AG04449 (cell line): ENCODE measurements at regions of chr10 and their contacts with region 1.

Region 1: DNA sequence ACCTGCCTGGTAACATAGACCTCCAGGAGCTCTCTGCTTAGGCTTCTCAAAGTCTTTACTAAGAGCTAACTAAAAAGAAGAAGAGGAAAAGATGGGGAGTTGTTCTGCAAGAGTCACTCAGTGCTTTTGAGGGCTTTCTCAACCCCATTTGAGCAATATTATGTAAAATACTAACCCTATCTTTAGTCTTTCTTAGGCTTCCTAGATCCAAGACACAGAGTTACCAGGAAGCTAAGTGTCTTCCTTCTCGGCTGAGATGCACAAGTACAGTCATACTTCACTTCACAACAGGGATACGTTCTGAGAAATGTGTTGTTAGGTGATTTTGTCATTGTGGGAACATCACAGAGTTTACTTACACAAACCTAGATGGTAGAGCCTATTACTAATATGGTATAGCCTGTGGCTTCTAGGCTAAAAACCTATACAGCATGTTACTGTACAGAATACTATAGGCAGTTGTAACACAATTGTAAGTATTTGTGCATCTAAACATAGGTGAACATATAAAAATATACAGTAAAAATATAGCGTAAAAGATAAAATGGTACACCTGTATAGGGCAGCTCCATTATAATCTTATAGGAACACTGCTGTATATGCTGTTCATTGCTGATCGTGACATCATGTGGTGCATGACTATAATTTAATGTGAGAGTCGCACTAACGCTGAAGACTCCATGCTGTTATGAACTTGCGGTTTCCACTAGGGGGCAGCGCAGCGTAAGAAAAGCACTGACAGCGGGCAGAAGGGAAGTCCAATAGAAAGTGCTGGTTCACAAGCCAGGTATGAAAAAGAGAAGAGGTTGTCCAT is 16.3 kb downstream of the ANKRD22 start:
- DNase-seq: no peak
- H3K4me3 ChIP-seq: no peak overlapping the region
- CTCF ChIP-seq: peak; percentile 87

Region 2: DNA sequence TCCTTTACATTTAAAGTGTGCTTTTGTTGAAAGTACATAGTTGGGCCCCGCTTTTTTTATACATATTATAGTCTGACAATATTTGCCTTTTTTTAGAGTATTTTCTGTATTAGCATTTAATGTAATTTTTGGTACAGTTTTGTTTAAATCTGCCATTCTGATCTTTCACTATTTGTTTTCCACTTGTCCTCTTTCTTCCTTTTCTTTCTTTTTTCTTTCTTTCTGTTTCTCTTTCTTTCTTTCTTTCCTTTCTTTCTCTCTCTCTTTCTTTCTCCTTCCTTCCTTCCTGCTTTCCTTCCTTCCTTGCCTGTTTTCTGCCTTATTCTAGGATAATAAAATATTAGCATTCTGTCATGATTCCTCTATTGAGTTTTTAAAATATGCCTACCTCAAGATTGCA is 119.8 kb before region 1 on chr10:
- CTCF ChIA-PET with region 1: no interaction called
- POLR2A ChIA-PET with region 1: no interaction called
- DNase-seq: no peak
- H3K4me3 ChIP-seq: no peak overlapping the region
- CTCF ChIP-seq: no peak

Region 3: DNA sequence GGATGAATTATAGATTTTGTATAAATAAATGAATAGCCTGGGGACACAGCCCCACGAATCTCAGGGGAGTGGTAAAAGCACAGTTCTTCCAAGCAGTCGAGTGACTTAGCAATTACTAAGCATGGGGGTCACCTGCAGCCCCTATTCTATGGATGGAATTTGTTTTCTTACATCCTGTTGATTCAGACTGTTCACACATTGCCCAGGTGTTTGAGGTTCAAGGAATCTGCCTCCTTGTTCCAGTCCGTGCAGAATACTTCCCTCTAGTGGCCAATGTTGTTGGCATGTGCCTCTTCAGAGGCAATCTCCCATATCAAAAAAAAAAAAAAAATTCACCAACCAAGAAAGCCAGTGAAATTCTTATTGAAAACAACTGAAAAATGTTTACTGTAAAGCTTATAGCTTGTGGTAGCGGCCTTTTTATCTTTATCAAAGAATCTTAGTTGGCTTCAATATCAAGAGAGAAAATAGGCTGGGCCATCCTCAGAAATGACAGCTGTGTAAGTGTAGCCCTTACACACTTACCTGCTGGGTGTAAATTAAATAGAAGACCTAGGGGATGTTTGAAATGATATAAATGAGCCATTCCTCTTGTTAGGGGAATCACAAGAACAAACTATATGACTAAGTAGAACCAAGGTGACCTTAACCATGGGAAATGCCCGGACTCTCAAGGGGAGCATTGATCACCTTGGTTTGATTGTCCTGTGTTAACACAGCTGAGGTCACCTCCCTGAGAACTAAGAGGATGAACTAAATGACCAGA is 24.9 kb before region 1 on chr10:
- CTCF ChIA-PET with region 1: interaction called, 15 read pairs
- POLR2A ChIA-PET with region 1: no interaction called
- DNase-seq: no peak
- H3K4me3 ChIP-seq: no peak overlapping the region
- CTCF ChIP-seq: peak; percentile 61

Region 4: DNA sequence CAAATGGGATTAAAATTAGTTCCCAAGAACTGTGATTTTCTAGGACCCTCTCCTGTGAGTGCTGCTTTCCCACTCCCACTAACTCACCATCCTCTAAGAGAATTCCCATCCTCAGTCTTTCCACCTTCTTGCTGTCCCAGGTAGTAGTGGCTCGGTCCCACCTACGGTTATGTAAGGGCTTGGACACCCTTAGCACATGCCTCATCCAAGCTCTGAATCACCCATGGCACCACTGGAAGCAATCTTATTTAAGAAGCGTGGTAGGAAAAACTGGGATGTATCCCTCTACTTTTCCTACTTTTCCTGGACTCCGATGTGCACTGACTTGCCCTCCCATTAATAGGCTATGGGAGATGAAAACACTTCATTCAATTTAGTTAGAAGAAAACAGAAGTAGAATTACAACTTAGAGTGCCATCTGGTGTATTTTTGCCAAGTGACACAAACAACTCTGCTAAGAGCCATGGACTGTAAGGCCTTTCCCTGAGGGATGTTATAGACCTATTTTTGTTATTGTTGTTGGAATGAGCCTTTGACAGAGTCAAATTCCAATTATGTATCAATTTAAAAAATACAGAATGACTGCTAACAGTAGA is 30.1 kb after region 1 on chr10:
- CTCF ChIA-PET with region 1: interaction called, 84 read pairs
- POLR2A ChIA-PET with region 1: no interaction called
- DNase-seq: no peak
- H3K4me3 ChIP-seq: no peak overlapping the region
- CTCF ChIP-seq: no peak

Region 5: GRCh38 chr10:88892222-88892967 is 57.1 kb after region 1 on chr10:
- CTCF ChIA-PET with region 1: interaction called, 20 read pairs
- POLR2A ChIA-PET with region 1: no interaction called
- DNase-seq: no peak
- H3K4me3 ChIP-seq: no peak overlapping the region
- CTCF ChIP-seq: no peak

Region 6: GRCh38 chr10:88920986-88921593 is 85.8 kb after region 1 on chr10:
- CTCF ChIA-PET with region 1: interaction called, 1,009 read pairs
- POLR2A ChIA-PET with region 1: no interaction called
- DNase-seq: no peak
- H3K4me3 ChIP-seq: no peak overlapping the region
- CTCF ChIP-seq: no peak

Region 7: GRCh38 chr10:88979153-88979562 is 143.9 kb after region 1 on chr10:
- CTCF ChIA-PET with region 1: interaction called, 31 read pairs
- POLR2A ChIA-PET with region 1: no interaction called
- DNase-seq: peak; percentile 76
- H3K4me3 ChIP-seq: no peak overlapping the region
- CTCF ChIP-seq: no peak

Region 8: GRCh38 chr10:89217057-89217990 is 382.0 kb after region 1 on chr10:
- CTCF ChIA-PET with region 1: interaction called, 41 read pairs
- POLR2A ChIA-PET with region 1: no interaction called
- DNase-seq: no peak
- H3K4me3 ChIP-seq: no peak overlapping the region
- CTCF ChIP-seq: peak; percentile 45